ENCODE measurements at regions of chr7 and their contacts with region 1.

Region 1: DNA sequence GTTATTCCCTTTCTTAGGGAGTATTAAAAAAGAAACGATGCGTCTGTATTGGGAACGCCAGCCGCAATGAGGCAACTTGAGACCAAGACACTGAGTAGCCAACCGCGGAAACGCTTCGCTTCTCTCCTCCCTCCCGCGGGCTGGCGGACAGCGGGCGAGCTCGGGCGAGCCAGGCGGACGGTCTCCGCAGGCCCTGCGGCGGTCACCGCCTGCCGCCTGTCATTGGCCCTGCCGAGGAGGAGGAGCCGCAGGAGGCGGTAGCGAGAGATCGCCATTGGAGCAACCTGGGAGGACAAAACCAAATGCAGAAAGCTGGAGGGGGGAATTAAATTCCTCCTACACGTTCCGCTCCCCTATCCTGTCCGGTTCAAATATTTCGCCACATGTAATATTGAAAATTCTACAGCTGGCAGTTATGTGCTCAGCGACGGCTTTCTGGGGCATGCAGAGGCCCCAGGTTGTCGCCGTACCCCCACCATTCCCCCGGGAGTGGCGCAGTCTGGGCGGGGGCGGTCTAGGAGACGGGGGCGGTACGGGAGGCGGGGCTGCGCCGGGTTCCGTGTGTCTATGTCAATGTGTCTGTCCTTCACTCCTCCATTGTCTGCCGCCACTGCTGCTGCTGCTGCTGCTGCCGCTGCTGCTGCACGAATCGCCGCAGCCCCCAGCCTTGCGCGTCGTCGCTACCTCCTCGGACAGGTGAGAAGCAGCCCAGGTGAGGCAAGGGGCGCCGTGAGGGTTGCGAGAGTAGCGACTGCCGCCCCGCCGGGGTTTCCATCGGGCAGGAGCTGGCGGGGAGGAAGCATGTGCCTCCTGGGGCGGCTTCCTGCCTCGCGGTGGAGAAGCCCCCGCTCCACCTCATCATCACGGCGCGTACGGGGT is at the starts of genes ANKMY2 and BZW2:
- DNase-seq: peak; percentile 87 to 97 (median 95)

Region 2: DNA sequence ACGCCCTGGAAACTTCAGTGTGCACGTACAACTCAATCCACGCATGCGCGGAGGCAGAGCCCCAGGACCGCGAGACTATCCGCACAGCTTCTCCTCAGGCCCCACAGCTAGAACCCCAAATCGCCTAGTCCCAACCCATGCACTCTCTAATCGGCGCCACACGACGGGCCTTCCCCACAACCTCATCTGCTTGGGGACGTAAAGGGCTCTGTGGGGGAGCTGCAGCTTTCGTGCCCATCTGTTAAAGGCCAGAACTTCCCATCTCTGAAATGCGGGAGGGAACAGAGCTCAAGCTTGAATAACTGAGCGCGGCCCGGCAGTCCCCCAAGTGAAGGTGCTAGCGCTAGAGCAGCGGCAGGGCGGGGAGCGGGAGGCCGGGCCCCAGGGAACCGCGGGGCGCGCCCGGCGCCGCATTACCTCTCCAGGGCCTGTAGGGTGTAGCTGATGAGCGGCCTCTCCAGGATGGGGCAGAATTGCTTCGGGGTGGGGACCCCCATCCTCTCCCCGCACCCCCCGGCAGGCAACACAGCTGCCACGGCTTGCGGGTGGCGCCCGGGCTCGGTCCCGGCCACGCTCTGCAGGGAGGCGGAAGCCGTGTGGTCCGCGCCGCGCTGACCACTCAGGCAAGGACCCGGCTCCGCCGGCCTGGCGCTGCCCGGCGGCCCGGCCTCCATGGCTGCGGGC is 225.0 kb before region 1 on chr7:
- intact Hi-C with region 1: loop called (anchors 5 kb)
- DNase-seq: peak; percentile 75 to 95 (median 89)

Measured in head of caudate nucleus (tissue), 42 donors.